Activated naive CD4-positive, alpha-beta T cell treated with anti-CD3 and anti-CD28 coated beads for 36 hours (primary cell): ENCODE measurements at regions of chr1 and their contacts with region 1.

Region 1: GRCh38 chr1:211939876-211940468 is 95.4 kb downstream of the INTS7 start:
- DNase-seq: peak; percentile 86
- H3K4me3 Mint-ChIP-seq: no peak overlapping the region
- H3K27ac Mint-ChIP-seq: no peak overlapping the region
- H3K4me1 Mint-ChIP-seq: peaks cover 44% of the 10 kb centered on the region
- H3K27me3 Mint-ChIP-seq: no peaks in the 10 kb centered on the region

Region 2: GRCh38 chr1:211382714-211383480 is 557.1 kb before region 1 on chr1:
- CTCF ChIA-PET with region 1: no interaction called
- intact Hi-C with region 1: loop called (anchors 5 kb)
- DNase-seq: peak; percentile 80
- H3K4me3 Mint-ChIP-seq: peak overlapping the region; percentile 89
- H3K27ac Mint-ChIP-seq: peak overlapping the region; percentile 92
- H3K4me1 Mint-ChIP-seq: peaks cover 40% of the 10 kb centered on the region
- H3K27me3 Mint-ChIP-seq: no peaks in the 10 kb centered on the region

Region 3: DNA sequence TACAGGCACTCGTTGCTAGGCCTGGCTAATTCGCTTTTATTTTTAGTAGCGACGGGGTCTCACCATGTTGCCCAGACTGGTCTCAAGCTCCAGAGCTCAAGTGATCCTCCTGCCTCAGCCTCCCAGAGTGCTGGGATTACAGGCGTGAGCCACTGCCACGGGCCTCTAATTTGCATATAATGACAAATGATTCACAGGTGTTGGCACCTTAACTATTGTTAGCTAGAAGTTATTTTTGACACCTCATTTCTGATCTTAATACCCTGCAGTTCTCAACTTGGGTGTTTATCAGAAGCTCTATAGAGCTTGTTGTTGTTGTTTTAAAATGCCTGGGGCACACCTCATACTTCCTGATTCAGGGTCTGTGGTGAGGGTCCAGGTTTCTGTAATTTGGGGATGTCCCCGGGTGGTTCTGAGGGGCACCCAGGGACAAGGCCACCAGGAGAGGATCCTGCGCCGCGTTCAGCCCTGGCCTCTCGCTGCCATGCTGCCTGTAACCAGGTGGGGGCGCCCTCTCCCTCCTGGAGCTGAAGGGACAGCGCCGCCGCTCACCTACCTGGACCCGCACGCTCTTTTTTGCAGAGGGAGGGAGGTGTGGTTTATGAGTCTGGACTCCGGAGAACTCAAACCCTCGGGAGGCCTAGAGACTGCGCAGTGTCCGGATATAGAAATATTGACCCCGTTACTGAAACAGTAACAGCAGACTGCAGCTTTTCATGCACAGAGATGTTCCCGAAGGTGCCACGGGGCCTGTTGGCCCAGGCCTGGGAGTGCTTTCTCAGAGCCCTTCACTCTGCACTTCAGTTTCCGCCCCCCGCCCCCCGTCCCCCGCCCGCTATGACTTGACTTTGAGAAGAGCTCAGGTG is 241.6 kb before region 1 on chr1:
- CTCF ChIA-PET with region 1: interaction called, 14 read pairs
- intact Hi-C with region 1: loop called (anchors 5 kb)
- DNase-seq: peak; percentile 92
- H3K4me3 Mint-ChIP-seq: peak overlapping the region; percentile 49
- H3K27ac Mint-ChIP-seq: no peak overlapping the region
- H3K4me1 Mint-ChIP-seq: peaks cover 14% of the 10 kb centered on the region
- H3K27me3 Mint-ChIP-seq: no peaks in the 10 kb centered on the region

Region 4: DNA sequence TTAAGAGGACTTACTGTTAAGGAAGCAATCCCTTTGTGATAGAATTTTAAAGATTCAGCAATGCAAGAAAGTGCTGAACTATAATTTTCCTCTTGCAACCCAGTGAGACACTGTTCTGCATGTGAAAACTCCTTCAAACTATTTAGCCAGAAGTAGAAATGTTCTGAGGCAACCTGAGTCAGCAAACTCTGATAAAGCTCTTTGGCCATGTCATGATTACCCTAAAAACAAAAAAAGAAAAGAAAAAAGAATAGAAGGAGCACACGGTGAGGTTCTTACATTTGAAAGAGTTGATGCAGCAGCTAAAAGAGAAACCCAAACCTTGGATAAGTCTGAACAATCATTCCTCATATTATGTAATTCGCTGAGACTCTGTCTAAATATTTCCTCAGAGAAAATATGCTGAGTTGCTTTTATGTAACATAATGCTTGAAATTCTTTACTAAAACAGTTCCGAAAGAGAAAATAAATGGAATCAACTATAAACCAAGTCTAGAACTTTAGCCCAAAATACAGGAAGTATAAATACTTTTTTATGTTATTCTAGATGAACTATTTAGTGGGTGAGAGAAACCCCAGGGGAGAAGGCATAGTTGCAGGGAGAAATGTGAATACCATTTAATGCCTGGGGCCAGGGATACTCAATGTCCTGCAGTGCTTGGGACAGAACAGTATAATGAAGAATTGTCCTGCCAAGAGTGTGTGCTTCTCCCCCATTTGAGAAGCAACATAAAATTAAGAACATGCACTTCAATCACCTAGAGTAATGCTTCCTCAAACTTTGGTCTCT is 35.4 kb after region 1 on chr1:
- CTCF ChIA-PET with region 1: no interaction called
- intact Hi-C with region 1: no loop called
- DNase-seq: no peak
- H3K4me3 Mint-ChIP-seq: no peak overlapping the region
- H3K27ac Mint-ChIP-seq: no peak overlapping the region
- H3K4me1 Mint-ChIP-seq: no peaks in the 10 kb centered on the region
- H3K27me3 Mint-ChIP-seq: no peaks in the 10 kb centered on the region

Region 5: DNA sequence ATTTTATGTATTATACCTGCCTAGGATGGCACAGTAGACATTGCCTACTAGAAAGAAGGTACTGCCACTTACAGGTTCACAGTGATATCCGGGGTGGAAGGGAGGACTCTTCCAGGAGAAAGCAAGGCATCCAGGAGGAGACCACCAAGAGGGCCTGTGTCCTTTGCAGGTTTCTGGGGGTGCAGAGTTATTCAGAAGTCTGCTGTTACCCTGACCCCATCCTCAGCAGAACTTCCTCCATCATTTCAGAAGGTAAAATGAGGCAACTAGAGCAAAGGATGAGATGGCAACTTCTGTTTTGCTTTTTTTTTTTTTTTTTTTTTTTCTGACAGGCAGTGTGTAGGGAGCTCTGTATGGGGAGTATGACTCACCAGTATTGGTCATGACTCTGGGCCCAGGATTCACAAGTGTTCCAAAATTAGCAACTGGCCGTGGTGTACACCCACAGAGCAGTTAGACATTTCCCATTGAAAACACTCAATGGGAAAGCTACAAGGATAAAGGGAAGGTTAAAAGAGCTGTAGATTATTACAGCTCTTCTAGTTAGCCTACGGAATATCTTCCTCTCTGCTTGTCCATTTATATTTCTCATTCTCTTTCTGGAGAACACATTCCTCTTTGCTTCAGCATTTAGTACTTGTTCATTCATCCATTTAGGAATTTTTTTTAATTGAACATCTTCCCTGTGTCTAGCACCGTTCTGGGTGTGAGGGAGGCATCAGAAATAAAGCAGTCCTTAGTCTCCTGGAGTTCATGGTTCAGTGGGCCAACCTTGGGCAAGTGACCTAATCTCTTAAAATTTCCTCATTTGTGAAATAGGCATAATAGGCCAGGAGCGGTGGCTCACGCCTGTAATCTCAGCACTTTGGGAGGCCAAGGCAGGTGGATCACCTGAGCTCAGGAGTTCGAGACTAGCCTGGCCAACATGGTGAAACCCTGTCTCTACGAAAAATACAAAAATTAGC is 294.7 kb after region 1 on chr1:
- CTCF ChIA-PET with region 1: no interaction called
- intact Hi-C with region 1: loop called (anchors 5 kb)
- DNase-seq: peak; percentile 60
- H3K4me3 Mint-ChIP-seq: no peak overlapping the region
- H3K27ac Mint-ChIP-seq: peak overlapping the region; percentile 19
- H3K4me1 Mint-ChIP-seq: peaks cover 14% of the 10 kb centered on the region
- H3K27me3 Mint-ChIP-seq: peaks cover 4% of the 10 kb centered on the region

Region 6: GRCh38 chr1:212566522-212567479 is 626.8 kb after region 1 on chr1:
- CTCF ChIA-PET with region 1: no interaction called
- intact Hi-C with region 1: loop called (anchors 1 kb)
- DNase-seq: peak; percentile 80
- H3K4me3 Mint-ChIP-seq: peak overlapping the region; percentile 78
- H3K27ac Mint-ChIP-seq: peak overlapping the region; percentile 88
- H3K4me1 Mint-ChIP-seq: peaks cover 32% of the 10 kb centered on the region
- H3K27me3 Mint-ChIP-seq: no peaks in the 10 kb centered on the region